ENCODE measurements at regions of chr5 and their contacts with region 1.

Region 1: DNA sequence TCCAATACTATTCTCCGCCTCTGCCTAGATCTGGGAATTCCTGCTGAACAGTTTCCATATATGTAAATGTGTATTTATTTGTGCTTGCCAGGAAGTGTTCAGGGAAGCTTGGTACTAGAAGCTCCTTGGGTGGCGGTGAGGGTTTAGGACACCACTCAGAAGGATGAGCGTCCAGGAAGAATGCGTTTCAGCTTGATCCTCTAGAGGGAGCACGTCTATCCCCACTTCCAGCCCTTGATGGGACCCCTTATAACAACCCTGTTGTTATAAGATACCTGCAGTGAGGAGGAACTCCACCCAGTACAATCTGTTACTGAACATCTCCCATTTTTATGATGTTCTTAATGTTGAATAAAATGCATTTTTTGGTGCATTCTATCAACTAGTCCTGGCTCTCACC is 88.9 kb downstream of the CYFIP2 start:
- DNase-seq: no peak
- ATAC-seq: no peak
- H3K4me3 Mint-ChIP-seq: no peak overlapping the region
- H3K27ac Mint-ChIP-seq: peak overlapping the region; percentile 22
- H3K4me1 Mint-ChIP-seq: peaks cover 53% of the 10 kb centered on the region
- H3K27me3 Mint-ChIP-seq: no peaks in the 10 kb centered on the region

Region 2: DNA sequence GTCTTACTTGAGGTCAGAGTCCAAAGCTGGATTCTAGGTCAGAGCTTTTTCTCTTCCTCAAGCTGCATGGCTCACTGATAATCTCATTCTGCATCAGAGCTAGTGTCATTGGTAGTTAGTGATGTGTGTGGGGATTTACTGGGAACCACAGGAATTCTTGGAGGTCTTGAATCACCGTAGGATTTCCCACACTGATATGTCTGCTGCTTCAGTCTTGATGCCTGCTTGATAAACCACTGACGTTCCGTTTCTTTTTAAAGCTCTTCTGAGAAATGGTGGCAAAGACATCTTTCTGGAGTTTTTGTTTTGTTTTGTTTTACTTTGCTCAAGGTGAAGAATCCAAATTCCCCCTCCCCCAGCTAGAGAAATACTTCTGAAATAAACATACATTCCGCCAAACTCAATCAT is 187.6 kb before region 1 on chr5:
- CTCF ChIA-PET with region 1: no interaction called
- POLR2A ChIA-PET with region 1: no interaction called
- intact Hi-C with region 1: loop called in 1 of 2 experiments (anchors 1 kb)
- DNase-seq: no peak
- ATAC-seq: peak; percentile 74
- H3K4me3 Mint-ChIP-seq: peak overlapping the region; percentile 47
- H3K27ac Mint-ChIP-seq: peak overlapping the region; percentile 88
- H3K4me1 Mint-ChIP-seq: peaks cover 76% of the 10 kb centered on the region
- H3K27me3 Mint-ChIP-seq: no peaks in the 10 kb centered on the region

Region 3: GRCh38 chr5:157172403-157172802 is 182.4 kb before region 1 on chr5:
- CTCF ChIA-PET with region 1: no interaction called
- POLR2A ChIA-PET with region 1: no interaction called
- intact Hi-C with region 1: loop called in 1 of 2 experiments (anchors 1 kb)
- DNase-seq: peak; percentile 96
- ATAC-seq: peak; percentile 93
- H3K4me3 Mint-ChIP-seq: peak overlapping the region; percentile 63
- H3K27ac Mint-ChIP-seq: peak overlapping the region; percentile 94
- H3K4me1 Mint-ChIP-seq: peaks cover 85% of the 10 kb centered on the region
- H3K27me3 Mint-ChIP-seq: no peaks in the 10 kb centered on the region

Region 4: GRCh38 chr5:157342822-157343402 is 11.9 kb before region 1 on chr5:
- CTCF ChIA-PET with region 1: interaction called, 13 read pairs
- POLR2A ChIA-PET with region 1: interaction called, 5 read pairs
- intact Hi-C with region 1: no loop called
- DNase-seq: peak; percentile 62
- ATAC-seq: peak; percentile 23
- H3K4me3 Mint-ChIP-seq: no peak overlapping the region
- H3K27ac Mint-ChIP-seq: peak overlapping the region; percentile 80
- H3K4me1 Mint-ChIP-seq: peaks cover 40% of the 10 kb centered on the region
- H3K27me3 Mint-ChIP-seq: no peaks in the 10 kb centered on the region

Region 5: GRCh38 chr5:157540707-157541446 is 186.1 kb after region 1 on chr5:
- CTCF ChIA-PET with region 1: no interaction called
- POLR2A ChIA-PET with region 1: no interaction called
- intact Hi-C with region 1: loop called (anchors 2 kb)
- DNase-seq: peak; percentile 68
- ATAC-seq: peak; percentile 85
- H3K4me3 Mint-ChIP-seq: peak overlapping the region; percentile 21
- H3K27ac Mint-ChIP-seq: peak overlapping the region; percentile 79
- H3K4me1 Mint-ChIP-seq: peaks cover 73% of the 10 kb centered on the region
- H3K27me3 Mint-ChIP-seq: no peaks in the 10 kb centered on the region

Region 6: GRCh38 chr5:157731272-157732129 is 376.7 kb after region 1 on chr5 and contains the start of gene THG1L:
- CTCF ChIA-PET with region 1: no interaction called
- POLR2A ChIA-PET with region 1: no interaction called
- intact Hi-C with region 1: loop called in 1 of 2 experiments (anchors 2 kb)
- DNase-seq: peak; percentile 99
- ATAC-seq: peak; percentile 95
- H3K4me3 Mint-ChIP-seq: peak within 1 kb of the TSS; percentile 86
- H3K27ac Mint-ChIP-seq: peak within 1 kb of the TSS; percentile 96
- H3K4me1 Mint-ChIP-seq: peaks cover 27% of the 10 kb centered on the region
- H3K27me3 Mint-ChIP-seq: no peaks in the 10 kb centered on the region
- total RNA-seq, gene THG1L: 29.9 to 33.8 TPM

Region 7: DNA sequence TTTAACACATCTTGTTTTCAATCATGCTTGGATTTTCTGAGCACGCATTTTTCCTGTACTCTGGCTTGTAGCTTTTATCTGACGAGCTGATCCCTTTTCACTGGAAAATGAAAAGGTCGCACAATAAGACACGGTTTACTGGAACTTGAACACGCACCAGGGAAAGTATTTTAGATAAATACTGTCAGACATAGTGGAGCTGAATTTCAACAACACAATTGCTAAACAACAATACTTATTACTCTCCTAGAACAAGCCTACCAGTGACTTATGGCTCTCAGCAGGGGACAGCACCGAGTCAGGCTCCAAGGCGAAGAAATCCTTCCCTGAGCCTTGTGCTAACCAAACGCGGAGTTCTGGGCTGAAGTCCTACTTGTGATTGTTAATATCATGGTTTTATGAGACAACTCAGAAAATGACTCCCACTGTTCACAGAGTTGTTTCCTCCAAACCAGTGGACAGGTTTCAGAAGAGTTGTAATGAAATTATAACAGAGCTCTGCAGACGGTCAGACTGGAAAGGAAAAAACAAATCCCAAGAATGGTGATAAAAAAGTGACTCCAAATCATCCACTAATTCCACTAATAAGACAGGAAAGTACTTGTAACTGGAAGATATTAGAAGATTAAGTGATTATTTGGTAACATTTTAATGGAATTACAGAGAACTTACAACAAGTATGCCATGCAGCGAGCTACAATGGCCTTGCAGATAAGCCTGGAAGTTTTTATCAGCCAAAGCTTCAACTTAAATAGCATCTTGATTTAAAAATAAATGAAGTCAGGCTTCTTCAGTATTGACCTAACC is 1385.4 kb after region 1 on chr5:
- CTCF ChIA-PET with region 1: no interaction called
- POLR2A ChIA-PET with region 1: no interaction called
- intact Hi-C with region 1: no loop called
- DNase-seq: no peak
- ATAC-seq: no peak
- H3K4me3 Mint-ChIP-seq: no peak overlapping the region
- H3K27ac Mint-ChIP-seq: no peak overlapping the region
- H3K4me1 Mint-ChIP-seq: no peaks in the 10 kb centered on the region
- H3K27me3 Mint-ChIP-seq: no peaks in the 10 kb centered on the region